ENCODE measurements at regions of chr10 and their contacts with region 1.

Region 1: DNA sequence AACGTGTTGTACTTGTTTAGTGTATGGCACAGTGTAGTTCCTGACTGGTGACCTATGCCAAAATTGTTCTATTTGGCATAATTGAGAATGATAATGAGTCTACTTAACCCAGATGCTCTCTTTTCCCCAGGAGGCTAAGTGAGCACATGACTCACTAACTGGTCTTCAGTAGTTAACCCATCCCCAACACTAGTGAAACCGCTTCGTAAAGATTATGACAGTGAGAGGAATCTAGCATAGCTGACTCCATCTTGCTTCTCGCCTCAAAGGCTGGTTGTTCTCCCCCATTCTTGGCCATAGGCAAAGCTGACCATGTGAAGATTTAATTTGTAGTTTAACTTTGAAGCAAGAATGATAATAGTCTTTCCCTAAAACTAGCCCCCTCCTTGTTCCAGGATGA is 47.2 kb downstream of the CDK1 start:
- DNase-seq: no peak
- H3K4me3 ChIP-seq: no peak overlapping the region
- H3K27ac ChIP-seq: no peak overlapping the region
- H3K4me1 ChIP-seq: peaks cover 8% of the 10 kb centered on the region
- H3K27me3 ChIP-seq: no peaks in the 10 kb centered on the region
- CTCF ChIP-seq: no peak
- EP300 ChIP-seq: no peak
- POLR2A ChIP-seq: no peak

Region 2: GRCh38 chr10:60073781-60074656 is 751.5 kb before region 1 on chr10:
- intact Hi-C with region 1: no loop called
- DNase-seq: no peak
- H3K4me3 ChIP-seq: no peak overlapping the region
- H3K27ac ChIP-seq: no peak overlapping the region
- H3K4me1 ChIP-seq: no peaks in the 10 kb centered on the region
- H3K27me3 ChIP-seq: no peaks in the 10 kb centered on the region
- CTCF ChIP-seq: no peak
- EP300 ChIP-seq: no peak
- POLR2A ChIP-seq: no peak

Region 3: DNA sequence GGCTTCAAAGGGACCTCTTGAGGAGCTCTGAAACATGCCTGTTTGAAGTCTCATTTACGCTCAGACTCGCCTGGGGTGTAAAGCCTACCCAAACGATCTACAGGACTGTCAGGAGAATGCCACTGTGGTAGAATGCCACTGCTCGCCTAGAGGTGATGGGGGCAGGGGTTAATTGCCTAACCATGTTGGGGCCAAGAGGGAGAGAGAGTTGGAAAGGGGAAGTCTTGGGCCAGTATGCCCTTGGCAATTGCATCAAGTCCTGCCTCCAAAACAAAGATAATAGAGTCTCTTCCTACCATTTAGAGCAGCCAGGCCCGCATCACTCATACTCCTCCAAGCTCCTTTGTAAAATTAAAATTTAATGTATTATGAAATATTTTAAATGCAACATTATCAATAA is 22.1 kb before region 1 on chr10:
- intact Hi-C with region 1: loop called in 1 of 4 experiments (anchors 2 kb)
- DNase-seq: no peak
- H3K4me3 ChIP-seq: no peak overlapping the region
- H3K27ac ChIP-seq: no peak overlapping the region
- H3K4me1 ChIP-seq: peaks cover 1% of the 10 kb centered on the region
- H3K27me3 ChIP-seq: no peaks in the 10 kb centered on the region
- CTCF ChIP-seq: no peak
- EP300 ChIP-seq: no peak
- POLR2A ChIP-seq: no peak

Measured in ovary (tissue), 10 donors.